Sciatic nerve (tissue), 2 donors: ENCODE measurements at regions of chrX and their contacts with region 1.

Region 1: GRCh38 chrX:85274333-85274732 is 30.5 kb downstream of the ZNF711 start:
- DNase-seq: no peak
- ATAC-seq: no peak

Region 2: GRCh38 chrX:83305381-83305780 is 1969.0 kb before region 1 on chrX:
- intact Hi-C with region 1: no loop called
- DNase-seq: no peak
- ATAC-seq: no peak

Region 3: DNA sequence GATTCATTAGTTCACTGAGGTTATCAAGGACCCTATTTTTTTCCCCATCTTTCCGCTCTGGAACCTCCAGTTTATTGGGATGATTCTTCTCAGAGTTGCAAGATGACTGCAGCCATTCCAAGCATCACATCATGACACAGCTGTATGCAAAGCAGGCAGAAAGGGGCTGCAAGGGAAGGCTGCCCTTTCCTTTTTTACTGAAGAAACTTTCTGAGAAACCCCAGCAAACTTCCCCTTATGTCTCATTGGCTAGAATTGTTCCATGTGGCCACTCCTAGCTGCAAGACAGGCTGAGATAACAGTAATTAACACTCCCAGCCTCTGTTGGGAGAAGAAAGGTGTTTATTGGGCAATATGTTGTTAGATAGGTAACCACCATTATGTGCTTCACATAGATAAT is 133.4 kb before region 1 on chrX:
- intact Hi-C with region 1: no loop called
- DNase-seq: no peak
- ATAC-seq: no peak

Region 4: DNA sequence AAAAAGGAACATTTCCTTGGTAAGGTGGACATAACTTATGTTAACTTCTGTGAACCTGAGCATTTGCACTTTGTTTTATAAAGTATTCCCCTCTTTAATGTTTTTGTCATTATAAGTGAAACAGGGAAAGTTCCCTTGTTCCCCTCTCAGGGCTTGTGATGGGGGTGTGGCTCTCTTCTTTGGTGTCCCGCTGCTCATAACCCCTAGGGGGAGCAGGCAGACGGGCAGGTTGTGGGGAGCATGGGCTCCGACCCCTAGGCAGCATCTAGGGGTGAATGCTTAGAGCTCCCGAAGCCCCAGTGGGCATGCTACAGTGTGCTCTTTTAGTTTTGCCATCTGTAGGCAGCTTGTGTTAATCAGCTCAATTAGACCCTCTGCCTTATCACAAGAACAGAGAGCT is 1074.3 kb after region 1 on chrX:
- intact Hi-C with region 1: loop called (anchors 10 kb)
- DNase-seq: no peak
- ATAC-seq: no peak